HepG2 (cell line): ENCODE measurements at regions of chrX and their contacts with region 1.

Region 1: DNA sequence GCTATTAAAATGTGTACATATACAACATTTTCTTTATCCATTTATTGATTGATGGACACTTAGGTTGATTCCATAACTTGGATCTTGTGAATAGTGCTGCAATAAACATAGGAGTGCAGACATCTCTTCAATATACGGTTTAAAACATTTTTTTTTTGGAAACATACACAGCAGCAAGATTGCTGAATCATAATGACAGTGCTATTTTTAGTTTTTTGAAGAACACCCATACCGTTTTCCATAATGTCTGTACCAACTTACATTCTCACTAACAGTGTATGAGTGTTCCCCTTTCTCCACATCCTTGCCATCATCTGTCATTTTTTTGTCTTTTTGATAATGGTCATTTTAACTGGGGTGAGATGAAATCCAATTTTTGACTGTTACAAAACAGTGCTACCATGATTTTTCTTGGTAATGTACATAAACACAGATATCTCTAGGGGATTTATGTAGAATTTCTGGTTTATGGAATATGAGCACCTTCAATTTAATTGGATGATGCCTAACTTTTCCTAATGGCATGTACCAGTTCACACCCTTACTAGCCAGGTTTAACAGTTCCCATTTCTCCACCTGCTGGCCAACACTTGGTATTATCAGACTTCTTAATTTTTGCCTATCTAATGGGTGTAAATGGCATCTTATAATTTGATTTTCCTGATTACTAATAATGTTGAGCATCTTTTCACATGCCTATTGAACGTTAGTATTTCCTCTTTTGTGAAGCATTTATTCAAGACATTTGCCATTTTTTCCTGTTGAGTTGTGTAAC is 21.0 kb upstream of the TMSB15B start:
- DNase-seq: no peak
- ATAC-seq: no peak
- H3K4me3 ChIP-seq: no peak overlapping the region
- H3K27ac ChIP-seq: no peak overlapping the region
- H3K4me1 ChIP-seq: no peaks in the 10 kb centered on the region
- H3K27me3 ChIP-seq: no peaks in the 10 kb centered on the region
- CTCF ChIP-seq: peak; percentile 32; the same call in 1 of the 2 replicates
- EP300 ChIP-seq: no peak
- POLR2A ChIP-seq: no peak
- RAD21 ChIP-seq: no peak

Region 2: DNA sequence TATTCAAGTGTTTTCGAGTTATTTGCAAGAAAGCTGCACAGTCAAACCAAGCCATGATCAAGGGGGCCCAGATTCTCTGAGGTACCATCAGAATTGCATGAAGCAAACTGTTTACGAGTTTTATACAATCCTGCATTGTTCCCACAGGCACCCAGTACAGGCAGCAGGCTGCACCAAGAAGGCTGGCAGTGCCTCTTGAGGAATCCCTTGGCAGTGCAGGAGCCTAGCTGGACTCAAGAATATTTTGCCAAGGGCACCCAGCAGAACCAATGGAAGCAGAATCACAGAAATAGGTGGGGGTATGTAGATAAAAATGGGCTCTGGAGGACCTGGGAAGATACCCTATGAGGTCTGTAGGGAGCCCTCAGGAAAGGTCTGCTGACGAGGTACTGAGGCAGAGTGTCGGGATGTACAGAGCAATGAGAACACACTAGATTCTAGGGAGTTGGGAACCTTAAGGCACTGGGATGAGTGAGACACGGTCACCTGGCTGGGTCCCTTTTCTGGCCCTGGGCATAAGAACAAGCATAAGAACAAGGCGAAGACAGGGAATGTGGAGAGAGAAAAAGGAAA is 167.2 kb before region 1 on chrX:
- CTCF ChIA-PET with region 1: no interaction called
- POLR2A ChIA-PET with region 1: no interaction called
- in situ Hi-C with region 1: no loop called
- intact Hi-C with region 1: no loop called
- DNase-seq: peak; percentile 1
- ATAC-seq: no peak
- H3K4me3 ChIP-seq: no peak overlapping the region
- H3K27ac ChIP-seq: no peak overlapping the region
- H3K4me1 ChIP-seq: no peaks in the 10 kb centered on the region
- H3K27me3 ChIP-seq: no peaks in the 10 kb centered on the region; a peak in 2 of 5 replicates
- CTCF ChIP-seq: 0 out of 2 replicates have a peak, but pooled peaks have one; percentile 9
- EP300 ChIP-seq: no peak
- POLR2A ChIP-seq: no peak
- RAD21 ChIP-seq: no peak

Region 3: DNA sequence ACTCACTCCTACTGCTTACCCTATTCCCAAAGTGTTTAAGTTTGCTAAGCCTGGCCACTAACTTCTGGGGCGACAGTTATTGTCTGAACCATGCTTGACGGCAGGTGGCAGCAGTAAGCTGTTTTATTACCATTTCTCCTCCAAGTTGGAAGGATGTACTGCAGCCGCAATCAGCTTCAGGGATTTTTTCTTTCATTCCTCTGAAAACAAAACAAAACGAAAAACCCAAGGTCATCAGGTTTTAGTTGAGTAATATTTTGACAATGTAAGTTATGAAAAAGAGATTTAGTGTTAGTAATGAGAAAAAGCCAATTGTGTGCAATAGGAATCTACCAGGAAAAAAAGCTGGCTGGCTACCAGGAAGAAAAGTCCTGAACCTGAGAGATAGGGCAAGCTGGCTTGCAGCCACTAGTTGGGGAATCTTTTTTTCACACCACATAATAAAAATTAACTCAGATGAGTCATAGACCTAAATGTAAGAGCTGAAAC is 96.2 kb before region 1 on chrX:
- CTCF ChIA-PET with region 1: no interaction called
- POLR2A ChIA-PET with region 1: no interaction called
- in situ Hi-C with region 1: loop called (anchors 25 kb)
- intact Hi-C with region 1: no loop called
- DNase-seq: peak; percentile 10
- ATAC-seq: peak; percentile 76
- H3K4me3 ChIP-seq: no peak overlapping the region
- H3K27ac ChIP-seq: no peak overlapping the region
- H3K4me1 ChIP-seq: no peaks in the 10 kb centered on the region
- H3K27me3 ChIP-seq: no peaks in the 10 kb centered on the region
- CTCF ChIP-seq: peak; percentile 63
- EP300 ChIP-seq: no peak
- POLR2A ChIP-seq: no peak
- RAD21 ChIP-seq: no peak